CD8-positive, alpha-beta memory T cell (primary cell): ENCODE measurements at regions of chr12 and their contacts with region 1.

Region 1: GRCh38 chr12:123449249-123449733 is 8.6 kb upstream of the SNRNP35 start:
- DNase-seq: no peak
- H3K4me3 ChIP-seq: no peak overlapping the region
- H3K4me3 Mint-ChIP-seq: peak overlapping the region; percentile 23 to 68 (median 53)
- H3K27ac ChIP-seq: no peak overlapping the region
- H3K27ac Mint-ChIP-seq: peak overlapping the region; percentile 32 to 85 (median 69)
- H3K4me1 ChIP-seq: peaks cover 14% of the 10 kb centered on the region
- H3K4me1 Mint-ChIP-seq: peaks cover 17 to 28% (median 22%) of the 10 kb centered on the region in 3 donors
- H3K27me3 ChIP-seq: no peaks in the 10 kb centered on the region
- H3K27me3 Mint-ChIP-seq: no peaks in the 10 kb centered on the region

Region 2: GRCh38 chr12:122980183-122981046 is 468.9 kb before region 1 on chr12 and contains the start of gene ARL6IP4:
- CTCF ChIA-PET with region 1: no interaction called
- POLR2A ChIA-PET with region 1: no interaction called
- DNase-seq: peak; percentile 44 to 69 (median 65)
- H3K4me3 ChIP-seq: peak within 1 kb of the TSS; percentile 84
- H3K4me3 Mint-ChIP-seq: peak within 1 kb of the TSS; percentile 87 to 93 (median 90)
- H3K27ac ChIP-seq: peak within 1 kb of the TSS; percentile 75
- H3K27ac Mint-ChIP-seq: peak within 1 kb of the TSS; percentile 68 to 97 (median 88)
- H3K4me1 ChIP-seq: peaks cover 56% of the 10 kb centered on the region
- H3K4me1 Mint-ChIP-seq: peaks cover 41 to 77% (median 48%) of the 10 kb centered on the region in 3 donors
- H3K27me3 ChIP-seq: no peaks in the 10 kb centered on the region
- H3K27me3 Mint-ChIP-seq: no peaks in the 10 kb centered on the region
- total RNA-seq, gene ARL6IP4: 172 to 181 TPM

Region 3: DNA sequence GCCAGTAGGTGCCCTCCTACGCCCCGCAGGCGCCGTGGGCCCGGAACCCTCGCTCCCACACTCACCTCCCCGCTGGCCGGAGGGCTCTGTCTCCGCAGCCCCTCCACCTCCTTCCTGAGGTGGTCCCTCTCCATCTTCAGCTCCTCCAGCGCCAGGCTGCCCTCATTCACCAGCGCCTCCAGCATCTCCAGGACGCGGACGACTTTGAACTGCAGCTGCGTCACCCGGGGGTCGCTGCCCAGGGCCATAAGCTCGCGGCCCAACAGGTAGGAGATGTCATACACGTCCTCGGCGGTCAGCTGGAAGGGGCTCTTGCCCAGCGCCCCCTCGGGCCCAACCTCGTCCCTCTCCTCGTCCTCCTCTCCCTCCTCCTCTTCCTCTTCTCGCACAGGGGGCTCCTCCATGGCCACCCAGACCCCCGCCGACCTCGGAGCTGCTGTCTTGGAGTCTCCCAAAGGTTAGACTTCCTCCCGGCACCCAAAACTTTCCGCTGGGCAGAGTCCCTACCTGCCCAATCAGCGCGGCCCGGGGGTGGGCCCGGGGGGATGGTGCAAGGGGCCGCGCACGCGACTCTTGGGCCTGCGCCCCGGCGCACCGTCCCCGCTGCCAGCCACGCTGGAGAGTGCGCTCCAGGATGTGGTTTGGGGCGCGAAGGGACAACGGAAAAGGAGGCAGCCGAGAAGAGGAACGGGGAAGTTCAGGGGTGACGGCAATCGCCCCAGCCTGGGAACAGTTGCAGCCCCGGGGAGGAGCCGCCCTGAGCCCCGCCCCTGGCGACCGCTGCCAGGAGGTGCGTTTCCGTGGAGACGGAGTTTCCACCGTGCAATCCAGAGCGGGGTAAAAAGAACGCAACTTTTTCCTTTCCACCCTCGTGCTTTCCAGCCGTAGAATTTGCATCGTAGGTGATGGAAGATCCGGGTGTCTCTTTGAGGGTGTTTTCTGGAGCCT is 13.0 kb before region 1 on chr12 and contains the start of gene RILPL2:
- CTCF ChIA-PET with region 1: interaction called, 8 read pairs
- POLR2A ChIA-PET with region 1: interaction called, 15 read pairs
- DNase-seq: peak; percentile 87 to 94 (median 92)
- H3K4me3 ChIP-seq: peak within 1 kb of the TSS; percentile 56
- H3K4me3 Mint-ChIP-seq: peak within 1 kb of the TSS; percentile 93 to 100 (median 97)
- H3K27ac ChIP-seq: peak within 1 kb of the TSS; percentile 88
- H3K27ac Mint-ChIP-seq: peak within 1 kb of the TSS; percentile 76 to 98 (median 96)
- H3K4me1 ChIP-seq: peaks cover 35% of the 10 kb centered on the region
- H3K4me1 Mint-ChIP-seq: peaks cover 31 to 57% (median 34%) of the 10 kb centered on the region in 3 donors
- H3K27me3 ChIP-seq: no peaks in the 10 kb centered on the region
- H3K27me3 Mint-ChIP-seq: no peaks in the 10 kb centered on the region
- total RNA-seq, gene RILPL2: 26.9 to 27.6 TPM

Region 4: DNA sequence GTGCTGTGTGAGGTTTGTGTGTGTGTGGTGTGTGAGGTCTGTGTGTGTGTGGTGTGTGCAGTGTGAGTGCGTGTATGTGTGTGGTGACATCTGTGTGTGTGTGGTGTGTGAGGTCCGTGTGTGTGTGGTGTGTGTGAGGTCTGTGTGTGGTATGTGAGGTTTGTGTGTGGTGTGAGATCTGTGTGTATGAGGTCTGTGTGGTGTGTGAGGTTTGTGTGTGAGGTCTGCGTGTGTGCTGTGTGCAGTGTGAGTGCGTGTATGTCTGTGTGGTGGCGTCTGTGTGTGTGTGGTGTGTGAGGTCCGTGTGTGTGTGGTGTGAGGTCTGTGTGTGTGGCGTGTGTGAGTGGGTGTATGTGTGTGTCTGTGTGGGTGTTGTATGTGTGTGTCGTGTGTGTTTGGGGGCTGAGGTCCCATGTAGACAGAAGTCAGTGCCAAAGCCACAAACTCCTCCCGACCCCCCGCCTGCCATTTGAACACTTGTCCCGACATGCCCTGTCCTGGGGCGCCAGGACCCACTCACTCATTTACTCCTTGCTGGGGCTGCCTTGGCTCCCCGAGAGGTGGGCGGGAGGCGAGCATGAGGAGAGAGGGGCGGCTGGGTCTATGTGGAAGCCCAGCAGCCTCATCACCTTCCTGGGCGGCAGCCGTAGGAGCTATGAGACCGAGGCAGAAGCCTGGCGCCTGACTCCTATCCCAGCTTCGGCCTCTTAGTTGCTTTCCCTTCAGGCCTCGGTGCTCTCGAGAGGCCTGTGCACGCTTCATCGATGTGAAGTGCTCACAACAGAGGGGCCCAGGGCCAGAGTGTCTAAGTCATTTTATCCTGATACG is 63.8 kb after region 1 on chr12:
- CTCF ChIA-PET with region 1: no interaction called
- POLR2A ChIA-PET with region 1: no interaction called
- DNase-seq: no peak
- H3K4me3 ChIP-seq: no peak overlapping the region
- H3K4me3 Mint-ChIP-seq: no peak overlapping the region
- H3K27ac ChIP-seq: no peak overlapping the region
- H3K27ac Mint-ChIP-seq: no peak overlapping the region
- H3K4me1 ChIP-seq: no peaks in the 10 kb centered on the region
- H3K4me1 Mint-ChIP-seq: no peaks in the 10 kb centered on the region
- H3K27me3 ChIP-seq: no peaks in the 10 kb centered on the region
- H3K27me3 Mint-ChIP-seq: no peaks in the 10 kb centered on the region

Region 5: DNA sequence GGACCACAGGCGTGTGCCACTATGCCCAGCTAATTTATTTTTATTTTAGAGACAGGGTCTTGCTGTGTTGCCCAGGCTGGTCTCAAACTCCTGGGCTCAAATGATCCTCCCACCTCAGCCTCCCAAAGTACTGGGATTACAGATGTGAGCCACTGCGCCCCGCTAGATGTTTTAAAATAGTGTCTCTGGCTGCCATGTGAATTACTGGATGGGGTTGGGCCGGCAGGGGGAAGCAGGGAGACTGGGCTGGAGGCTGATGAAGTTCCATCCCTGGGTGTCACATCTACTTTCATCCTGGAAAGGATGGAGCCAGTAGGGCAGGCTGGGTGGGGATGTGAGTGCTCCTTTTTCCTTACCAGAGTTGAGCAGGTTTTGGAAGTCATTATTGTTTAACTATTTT is 358.9 kb after region 1 on chr12:
- CTCF ChIA-PET with region 1: no interaction called
- POLR2A ChIA-PET with region 1: no interaction called
- DNase-seq: no peak
- H3K4me3 ChIP-seq: no peak overlapping the region
- H3K4me3 Mint-ChIP-seq: no peak overlapping the region
- H3K27ac ChIP-seq: no peak overlapping the region
- H3K27ac Mint-ChIP-seq: peak overlapping the region in 1 of 8 donors; percentile 31
- H3K4me1 ChIP-seq: no peaks in the 10 kb centered on the region
- H3K4me1 Mint-ChIP-seq: no peaks in the 10 kb centered on the region
- H3K27me3 ChIP-seq: no peaks in the 10 kb centered on the region
- H3K27me3 Mint-ChIP-seq: peaks cover 0 to 34% of the 10 kb centered on the region in 2 donors